ENCODE measurements at regions of chr1 and their contacts with region 1.

Region 1: DNA sequence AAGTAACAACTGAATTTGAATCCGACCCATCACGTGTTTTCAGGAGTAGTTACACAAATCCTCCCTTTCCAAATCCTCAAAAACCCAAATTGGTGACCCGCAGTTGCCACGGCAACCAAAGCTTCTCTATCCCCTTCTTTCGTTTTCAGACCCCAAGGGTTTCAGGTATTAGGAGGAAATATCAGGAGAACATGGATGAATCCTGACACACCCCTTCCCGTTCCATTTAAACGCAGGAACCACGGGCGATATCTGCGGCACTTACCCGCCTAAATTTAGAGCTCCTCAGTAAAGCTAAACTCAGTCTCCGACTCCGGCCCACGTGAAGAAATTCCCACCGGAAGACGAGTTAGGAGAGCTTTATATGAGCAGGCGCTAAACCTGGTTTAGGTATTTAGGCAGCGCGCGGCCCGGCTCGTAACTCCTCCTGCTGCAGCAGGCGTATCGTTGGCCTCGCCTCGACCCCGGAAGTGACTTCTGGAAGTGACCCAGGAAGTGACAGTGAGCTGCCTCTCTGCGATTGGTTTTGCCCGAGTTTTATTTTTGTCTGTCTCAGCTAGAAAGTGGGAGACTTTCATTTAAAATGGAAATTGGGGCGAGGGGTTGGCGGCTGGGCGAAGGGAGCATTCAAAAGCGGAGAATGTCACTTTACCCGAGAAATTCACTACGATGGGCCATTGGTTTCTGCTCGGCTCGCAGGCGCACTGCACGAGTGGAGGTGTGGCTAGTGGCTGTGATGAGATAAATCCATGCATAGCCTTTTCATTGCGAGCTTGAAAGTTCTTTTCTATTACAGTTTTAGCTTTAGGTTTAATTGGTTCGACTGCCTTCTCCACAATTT is at the start of gene TAF1A:
- DNase-seq: peak; percentile 77
- H3K4me3 Mint-ChIP-seq: peak within 1 kb of the TSS; percentile 92
- H3K27ac Mint-ChIP-seq: peak within 1 kb of the TSS; percentile 88
- H3K4me1 Mint-ChIP-seq: peaks cover 37% of the 10 kb centered on the region
- H3K27me3 Mint-ChIP-seq: peaks cover 6% of the 10 kb centered on the region
- total RNA-seq, gene TAF1A: 19.2 and 19.7 TPM in 2 replicates

Region 2: GRCh38 chr1:222634180-222635013 is 44.7 kb after region 1 on chr1:
- intact Hi-C with region 1: loop called (anchors 1 kb)
- DNase-seq: peak; percentile 59
- H3K4me3 Mint-ChIP-seq: no peak overlapping the region
- H3K27ac Mint-ChIP-seq: no peak overlapping the region
- H3K4me1 Mint-ChIP-seq: peaks cover 14% of the 10 kb centered on the region
- H3K27me3 Mint-ChIP-seq: no peaks in the 10 kb centered on the region

Region 3: GRCh38 chr1:222643938-222644635 is 54.4 kb after region 1 on chr1:
- intact Hi-C with region 1: loop called (anchors 1 kb)
- DNase-seq: peak; percentile 98
- H3K4me3 Mint-ChIP-seq: peak overlapping the region; percentile 99
- H3K27ac Mint-ChIP-seq: peak overlapping the region; percentile 97
- H3K4me1 Mint-ChIP-seq: peaks cover 33% of the 10 kb centered on the region
- H3K27me3 Mint-ChIP-seq: no peaks in the 10 kb centered on the region

Measured in activated T-helper 1 cell treated with anti-CD3 and anti-CD28 coated beads, Interleukin-12 subunit alpha, Interleukin-12 subunit beta, Interleukin-2, Interleukin-4 antibody, amounts not matched to agents 30 ng/mL and 10 ng/mL and 1 ng/mL, durations not matched to agents 14 hours and 24 hours and 36 hours (primary cell).